ENCODE measurements at regions of chr17 and their contacts with region 1.

Region 1: GRCh38 chr17:79045842-79046196 is 21.9 kb downstream of the C1QTNF1 start:
- DNase-seq: peak; percentile 41 to 91
- H3K4me3 ChIP-seq: no peak overlapping the region
- H3K27ac ChIP-seq: no peak overlapping the region
- H3K4me1 ChIP-seq: no peaks in the 10 kb centered on the region
- H3K27me3 ChIP-seq: peaks cover 0 to 2% (median 0%) of the 10 kb centered on the region in 4 experiments; a peak in 4 of 7 replicates
- CTCF ChIP-seq: peak; percentile 95 to 96 (median 95)
- EP300 ChIP-seq: no peak
- POLR2A ChIP-seq: no peak
- RAD21 ChIP-seq: peak; percentile 76 to 82

Region 2: DNA sequence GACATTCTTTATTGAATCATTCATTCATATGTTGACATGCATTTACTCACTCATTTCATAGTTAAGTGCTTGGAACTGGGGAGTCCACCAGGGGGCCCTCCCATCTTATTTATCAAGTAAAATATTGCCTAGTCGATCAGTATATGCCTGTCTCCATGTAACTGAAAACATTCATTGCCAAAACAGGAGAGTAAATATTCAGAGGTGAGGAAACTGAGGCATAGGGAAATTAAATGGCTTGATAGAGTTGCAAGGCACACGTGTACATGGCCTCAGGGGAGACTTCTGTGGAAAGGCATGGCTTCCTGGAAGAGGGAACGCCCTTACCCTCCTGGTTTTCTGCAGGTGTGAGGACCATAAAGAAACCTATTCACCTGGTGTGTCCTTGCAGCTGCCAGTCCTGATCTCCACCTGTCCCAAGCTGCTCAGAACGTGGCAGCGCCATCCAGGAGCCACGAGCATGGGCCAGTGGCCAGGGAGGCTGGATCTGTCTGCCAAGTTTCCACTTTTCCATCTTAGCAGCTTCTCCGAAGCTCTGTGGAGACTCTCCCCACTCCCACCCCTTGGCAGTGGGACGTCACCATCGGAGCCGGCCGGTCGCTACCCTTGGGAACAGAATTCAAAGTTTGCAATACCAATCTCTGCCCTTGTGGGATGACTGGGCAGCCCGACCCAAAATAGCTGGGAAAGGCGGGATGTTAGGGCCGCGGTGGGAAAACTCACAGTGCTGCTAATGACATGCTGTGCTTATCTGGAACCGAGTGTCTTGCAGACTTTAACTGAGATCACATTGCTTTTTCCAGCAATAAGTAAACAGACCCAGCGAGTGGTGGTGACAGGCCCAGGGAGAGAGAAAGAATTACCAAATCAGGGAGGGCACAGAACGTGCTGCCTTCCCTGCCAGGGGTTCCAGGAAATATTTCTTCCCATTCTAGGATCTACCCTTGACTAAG is 25.9 kb before region 1 on chr17:
- CTCF ChIA-PET with region 1: interaction called, 56 read pairs
- POLR2A ChIA-PET with region 1: no interaction called
- DNase-seq: no peak
- H3K4me3 ChIP-seq: no peak overlapping the region
- H3K27ac ChIP-seq: no peak overlapping the region
- H3K4me1 ChIP-seq: peaks cover 2 to 7% (median 4%) of the 10 kb centered on the region in 4 experiments; a peak in 4 of 7 replicates
- H3K27me3 ChIP-seq: peaks cover 14 to 50% (median 40%) of the 10 kb centered on the region in 4 experiments
- CTCF ChIP-seq: peak in 2 of 3 experiments; percentile 35 to 42; a peak in 2 of 4 replicates
- EP300 ChIP-seq: no peak
- POLR2A ChIP-seq: no peak
- RAD21 ChIP-seq: peak; percentile 61 to 64

Region 3: DNA sequence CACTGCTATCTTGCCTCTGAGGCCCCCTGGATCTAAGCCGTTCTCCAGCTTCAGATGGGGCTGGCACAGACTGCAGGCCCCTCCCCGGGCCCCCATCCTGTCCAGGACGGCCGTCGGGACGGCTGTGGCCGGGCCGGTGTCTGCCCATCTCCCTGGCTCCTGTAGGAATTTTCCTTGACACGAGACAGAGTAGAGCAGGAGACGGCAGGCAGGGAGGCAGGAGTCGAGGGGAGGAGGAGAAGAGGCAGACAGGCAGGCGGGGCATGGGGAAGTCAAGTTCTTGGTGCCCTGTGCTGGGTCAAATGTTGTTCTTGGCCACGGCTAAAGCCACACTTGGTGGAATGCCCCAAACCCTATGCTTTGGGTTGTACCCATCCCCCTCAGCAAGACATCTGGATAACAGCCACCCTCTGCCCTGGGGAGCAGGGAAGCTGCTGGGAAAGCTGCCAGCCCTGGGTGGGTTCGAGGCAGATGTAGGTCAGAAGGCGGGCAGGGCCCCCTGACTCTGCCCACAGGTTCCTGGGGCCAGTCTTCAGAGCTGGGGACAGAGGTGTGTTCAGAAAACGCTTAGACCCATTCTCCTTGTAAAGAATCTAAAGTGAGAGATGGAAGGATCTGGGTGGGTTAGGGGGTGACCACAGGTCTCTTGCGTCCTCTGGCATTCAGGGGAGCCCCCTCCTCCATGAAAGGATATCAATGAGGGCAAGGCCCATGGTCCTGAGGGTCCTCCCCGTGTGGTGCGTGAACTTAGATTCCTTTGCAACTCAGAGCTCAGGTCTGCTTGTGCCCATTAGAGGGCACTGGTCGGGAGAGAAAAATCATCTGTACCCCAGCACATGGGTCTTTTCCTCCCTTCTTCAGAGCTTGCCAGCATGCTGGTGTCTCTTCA is 17.6 kb before region 1 on chr17:
- CTCF ChIA-PET with region 1: interaction called, 63 read pairs
- POLR2A ChIA-PET with region 1: interaction called, 3 read pairs
- DNase-seq: no peak
- H3K4me3 ChIP-seq: no peak overlapping the region
- H3K27ac ChIP-seq: no peak overlapping the region
- H3K4me1 ChIP-seq: peaks cover 3 to 7% (median 5%) of the 10 kb centered on the region in 4 experiments; a peak in 4 of 7 replicates
- H3K27me3 ChIP-seq: peaks cover 10 to 56% (median 47%) of the 10 kb centered on the region in 4 experiments
- CTCF ChIP-seq: peak; percentile 21 to 33 (median 24); a peak in 3 of 4 replicates
- EP300 ChIP-seq: no peak
- POLR2A ChIP-seq: no peak
- RAD21 ChIP-seq: peak in 1 of 2 experiments; percentile 16; a peak in 1 of 4 replicates

Region 4: GRCh38 chr17:79057737-79058385 is 12.0 kb after region 1 on chr17:
- CTCF ChIA-PET with region 1: interaction called, 59 read pairs
- POLR2A ChIA-PET with region 1: no interaction called
- DNase-seq: no peak
- H3K4me3 ChIP-seq: no peak overlapping the region
- H3K27ac ChIP-seq: no peak overlapping the region
- H3K4me1 ChIP-seq: no peaks in the 10 kb centered on the region
- H3K27me3 ChIP-seq: no peaks in the 10 kb centered on the region; a peak in 1 of 7 replicates
- CTCF ChIP-seq: no peak
- EP300 ChIP-seq: no peak
- POLR2A ChIP-seq: no peak
- RAD21 ChIP-seq: no peak

Region 5: DNA sequence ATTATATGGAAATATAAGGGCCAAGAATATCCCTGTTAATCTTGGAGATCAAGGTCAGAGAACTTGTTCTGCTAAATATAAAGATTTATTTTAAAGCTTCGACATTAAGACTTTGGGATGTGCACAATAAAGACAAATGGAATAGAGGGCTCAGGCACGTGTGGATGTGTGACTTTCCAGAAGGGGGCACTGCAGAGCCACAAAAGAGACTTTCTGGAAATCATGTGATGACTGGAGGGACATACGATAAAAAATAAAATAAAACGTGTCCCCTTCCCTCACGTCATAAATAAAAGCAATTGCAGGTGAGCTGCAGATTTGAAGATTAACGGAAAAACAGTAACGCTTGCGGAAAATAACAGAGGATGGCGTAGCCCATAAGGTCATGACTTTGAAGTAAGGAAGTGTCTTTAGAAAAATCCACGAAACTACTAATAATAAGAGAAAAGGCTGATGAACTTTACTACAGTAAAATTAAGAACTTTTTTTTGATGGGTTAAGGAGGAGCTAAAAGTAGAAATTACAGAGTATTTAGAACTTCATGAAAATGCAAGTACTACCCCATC is 19.4 kb after region 1 on chr17:
- CTCF ChIA-PET with region 1: interaction called, 59 read pairs
- POLR2A ChIA-PET with region 1: interaction called, 4 read pairs
- DNase-seq: peak in 1 of 2 experiments; percentile 76
- H3K4me3 ChIP-seq: no peak overlapping the region
- H3K27ac ChIP-seq: no peak overlapping the region
- H3K4me1 ChIP-seq: no peaks in the 10 kb centered on the region
- H3K27me3 ChIP-seq: peaks cover 0 to 2% (median 0%) of the 10 kb centered on the region in 4 experiments; a peak in 1 of 7 replicates
- CTCF ChIP-seq: peak; percentile 30 to 67 (median 64)
- EP300 ChIP-seq: no peak
- POLR2A ChIP-seq: no peak
- RAD21 ChIP-seq: peak; percentile 74 to 76

Measured in H1 (cell line).